ENCODE measurements at regions of chr5 and their contacts with region 1.

Region 1: DNA sequence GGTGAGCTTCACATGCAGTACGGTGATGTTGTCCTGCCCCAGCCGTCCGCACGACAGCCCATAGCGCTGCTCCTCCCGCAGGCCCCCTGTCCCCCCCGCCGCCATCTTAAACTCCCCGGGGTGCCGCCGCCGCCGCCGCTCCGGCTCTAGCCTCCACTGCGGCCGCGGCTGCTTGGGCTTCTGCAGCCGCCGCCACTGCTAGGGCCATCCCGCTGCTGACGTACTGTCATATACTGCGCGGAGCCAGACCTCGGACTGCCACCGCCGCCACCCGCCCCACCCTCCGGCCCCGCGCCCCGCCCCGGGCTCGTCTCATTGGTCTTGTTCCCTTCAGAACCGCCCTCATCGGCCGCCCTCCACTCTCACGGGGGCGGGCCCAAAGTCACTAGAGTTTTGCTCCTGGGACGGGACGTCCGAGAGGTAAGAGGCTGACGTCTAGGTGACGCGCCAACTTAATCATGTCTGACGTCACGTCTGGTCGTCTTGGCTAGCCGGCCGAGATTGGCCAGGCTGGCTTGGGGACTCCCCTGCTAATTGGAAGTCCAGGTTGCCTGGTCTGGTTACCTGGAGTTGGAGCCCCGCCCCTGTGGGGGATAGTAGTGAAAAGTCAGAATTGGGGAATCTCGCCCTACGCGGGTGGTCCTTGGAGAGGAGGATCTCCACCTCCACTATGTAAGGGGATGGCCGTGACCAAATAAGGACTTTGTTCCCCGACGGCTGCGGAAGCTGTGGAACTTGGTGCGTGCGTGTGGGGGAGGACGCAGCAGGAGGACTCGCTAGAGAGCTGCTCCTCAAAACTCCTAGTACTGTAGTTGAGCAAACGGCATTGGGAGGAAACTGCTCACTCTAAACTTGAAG is at the start of gene ELL2:
- DNase-seq: peak; percentile 99
- H3K4me3 ChIP-seq: peak within 1 kb of the TSS; percentile 85 to 94 (median 92)
- H3K27ac ChIP-seq: peak within 1 kb of the TSS; percentile 97 to 99 (median 98)
- H3K4me1 ChIP-seq: peaks cover 0 to 31% (median 21%) of the 10 kb centered on the region in 4 donors
- H3K27me3 ChIP-seq: no peaks in the 10 kb centered on the region
- CTCF ChIP-seq: no peak
- EP300 ChIP-seq: peak; percentile 99 to 100 (median 99)
- POLR2A ChIP-seq: peak; percentile 82 to 86
- total RNA-seq, gene ELL2: 26.6 to 35.3 (median 29.8) TPM

Region 2: GRCh38 chr5:95554647-95555548 is 406.9 kb before region 1 on chr5 and contains the starts of genes ARSK and SKIC3:
- intact Hi-C with region 1: loop called (anchors 10 kb)
- DNase-seq: peak; percentile 98
- H3K4me3 ChIP-seq: peak within 1 kb of the TSS; percentile 59 to 90 (median 74)
- H3K27ac ChIP-seq: peak within 1 kb of the TSS; percentile 81 to 93 (median 90)
- H3K4me1 ChIP-seq: peaks cover 0 to 28% (median 20%) of the 10 kb centered on the region in 4 donors
- H3K27me3 ChIP-seq: no peaks in the 10 kb centered on the region
- CTCF ChIP-seq: peak in 3 of 4 experiments; percentile 27 to 32 (median 27)
- EP300 ChIP-seq: peak in 1 of 4 donors; percentile 61
- POLR2A ChIP-seq: peak; percentile 70 to 74
- total RNA-seq, gene ARSK: 6.7 to 13.3 (median 9.9) TPM
- total RNA-seq, gene SKIC3: 55.8 to 103 (median 71.3) TPM

Region 3: DNA sequence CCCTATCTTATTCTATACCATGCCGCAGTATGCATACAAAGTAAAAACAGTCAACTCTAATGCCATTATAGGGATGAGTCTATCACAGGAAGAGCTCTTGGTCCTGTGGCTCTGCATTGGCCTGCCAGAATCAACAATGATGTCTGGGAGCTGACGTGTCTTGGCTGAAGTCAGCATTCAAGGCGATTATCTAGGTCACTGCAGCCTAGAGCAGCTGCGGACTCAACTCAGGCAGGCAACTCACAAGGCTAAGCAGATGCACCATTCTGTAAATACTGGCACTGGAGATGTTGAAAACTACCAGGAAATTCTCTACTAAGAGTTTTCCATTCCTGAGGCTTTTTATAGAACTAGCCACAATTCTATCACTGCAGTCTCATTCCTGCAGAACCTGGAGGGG is 292.3 kb before region 1 on chr5:
- intact Hi-C with region 1: loop called (anchors 5 kb)
- DNase-seq: peak; percentile 96
- H3K4me3 ChIP-seq: no peak overlapping the region
- H3K27ac ChIP-seq: peak overlapping the region; percentile 69 to 89 (median 78)
- H3K4me1 ChIP-seq: peaks cover 0 to 35% (median 26%) of the 10 kb centered on the region in 4 donors
- H3K27me3 ChIP-seq: no peaks in the 10 kb centered on the region
- CTCF ChIP-seq: no peak
- EP300 ChIP-seq: peak; percentile 20 to 89 (median 42)
- POLR2A ChIP-seq: no peak

Region 4: GRCh38 chr5:95730730-95731570 is 230.9 kb before region 1 on chr5 and contains the start of gene RHOBTB3:
- intact Hi-C with region 1: loop called (anchors 5 kb)
- DNase-seq: peak; percentile 96
- H3K4me3 ChIP-seq: peak within 1 kb of the TSS; percentile 71 to 92 (median 86)
- H3K27ac ChIP-seq: peak within 1 kb of the TSS; percentile 89 to 98 (median 94)
- H3K4me1 ChIP-seq: peaks cover 0 to 61% (median 46%) of the 10 kb centered on the region in 4 donors
- H3K27me3 ChIP-seq: no peaks in the 10 kb centered on the region
- CTCF ChIP-seq: no peak
- EP300 ChIP-seq: peak in 1 of 4 donors; percentile 28
- POLR2A ChIP-seq: peak; percentile 22 to 75
- total RNA-seq, gene RHOBTB3: 75.6 to 151 (median 111) TPM

Region 5: GRCh38 chr5:95858661-95859326 is 103.1 kb before region 1 on chr5:
- intact Hi-C with region 1: loop called (anchors 2 kb)
- DNase-seq: peak; percentile 96
- H3K4me3 ChIP-seq: peak overlapping the region in 3 of 4 donors; percentile 16 to 33 (median 30)
- H3K27ac ChIP-seq: peak overlapping the region; percentile 72 to 83 (median 80)
- H3K4me1 ChIP-seq: peaks cover 0 to 31% (median 23%) of the 10 kb centered on the region in 4 donors
- H3K27me3 ChIP-seq: no peaks in the 10 kb centered on the region
- CTCF ChIP-seq: peak; percentile 96 to 98 (median 98)
- EP300 ChIP-seq: peak in 2 of 4 donors; percentile 58 to 84
- POLR2A ChIP-seq: no peak

Region 6: DNA sequence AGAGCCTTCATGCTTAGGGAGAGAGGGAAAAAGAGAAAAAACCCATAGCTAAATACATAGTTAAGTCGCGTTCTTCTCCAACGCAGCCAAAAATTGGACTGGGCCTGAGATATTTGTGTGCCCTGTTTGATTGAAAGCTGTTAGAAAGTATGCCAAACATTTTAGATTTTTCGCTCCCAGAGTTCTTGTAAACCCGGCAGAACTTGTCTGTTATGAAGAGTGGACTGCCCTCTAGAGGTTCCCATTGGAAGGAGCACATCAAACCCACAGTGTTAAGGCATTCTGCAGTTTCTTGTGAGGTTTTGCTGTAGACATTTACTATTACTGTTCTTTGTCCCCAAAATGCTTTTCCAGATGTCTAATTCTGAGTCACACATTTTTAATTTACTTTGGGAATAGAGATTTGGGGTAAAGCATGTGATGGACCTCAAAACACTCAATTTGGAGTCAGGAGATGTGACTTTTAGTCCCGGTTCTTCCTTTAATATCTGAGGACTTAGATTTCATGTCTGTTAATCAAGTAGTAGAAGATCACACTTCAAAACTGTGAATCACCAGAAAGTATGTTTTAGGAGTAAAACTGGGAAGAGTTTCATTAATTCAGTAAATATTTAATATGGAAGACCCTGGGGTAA is 374.6 kb after region 1 on chr5:
- intact Hi-C with region 1: loop called (anchors 5 kb)
- DNase-seq: peak; percentile 81
- H3K4me3 ChIP-seq: peak overlapping the region in 1 of 4 donors; percentile 20
- H3K27ac ChIP-seq: no peak overlapping the region
- H3K4me1 ChIP-seq: peaks cover 0 to 13% (median 4%) of the 10 kb centered on the region in 4 donors
- H3K27me3 ChIP-seq: no peaks in the 10 kb centered on the region
- CTCF ChIP-seq: peak; percentile 45 to 83 (median 80)
- EP300 ChIP-seq: no peak
- POLR2A ChIP-seq: no peak

Region 7: DNA sequence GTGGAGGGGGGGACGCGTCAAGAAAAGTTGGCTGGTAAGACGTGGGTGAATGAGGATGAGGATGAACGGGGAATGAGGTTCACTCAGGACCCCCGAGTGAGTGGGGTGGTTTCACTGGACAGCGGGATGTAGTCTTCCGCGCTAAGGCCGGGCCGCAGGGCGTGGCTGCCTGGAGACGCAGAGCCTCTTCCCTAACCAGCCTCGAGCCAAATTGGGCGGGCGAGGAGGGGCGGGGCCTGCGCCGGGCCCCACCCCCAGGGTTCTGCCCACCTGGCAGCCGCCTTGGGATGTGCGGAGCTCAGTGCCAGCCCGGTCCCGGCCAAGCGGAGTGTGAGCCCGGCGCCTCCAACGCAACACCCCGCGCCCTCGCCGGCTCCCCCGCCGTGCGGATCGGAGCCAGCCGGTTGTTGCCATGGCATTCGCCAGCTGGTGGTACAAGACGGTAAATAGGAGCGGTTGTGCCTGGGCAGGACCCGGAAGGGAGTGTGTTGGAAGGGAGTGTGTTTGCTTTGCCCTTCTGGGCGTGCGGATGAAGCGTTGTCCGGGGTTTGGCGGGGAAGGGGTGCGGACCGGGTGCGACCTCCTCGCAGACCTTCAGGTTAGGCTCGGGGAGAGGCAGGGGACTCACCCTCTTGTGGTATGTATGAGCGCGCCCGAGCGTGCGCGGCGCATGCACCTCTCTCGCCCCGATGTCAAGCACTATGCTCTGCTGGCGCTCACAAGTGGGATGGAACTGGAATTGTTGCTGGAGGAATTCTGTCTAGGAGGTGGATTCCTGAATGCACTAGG is 701.1 kb after region 1 on chr5:
- intact Hi-C with region 1: loop called (anchors 5 kb)
- DNase-seq: peak; percentile 97
- H3K4me3 ChIP-seq: peak overlapping the region; percentile 92 to 98 (median 94)
- H3K27ac ChIP-seq: peak overlapping the region; percentile 99 to 100 (median 100)
- H3K4me1 ChIP-seq: peaks cover 0 to 44% (median 19%) of the 10 kb centered on the region in 4 donors
- H3K27me3 ChIP-seq: no peaks in the 10 kb centered on the region
- CTCF ChIP-seq: no peak
- EP300 ChIP-seq: no peak
- POLR2A ChIP-seq: peak; percentile 65 to 81